HCT116 (cell line): ENCODE measurements at regions of chr22 and their contacts with region 1.

Region 1: DNA sequence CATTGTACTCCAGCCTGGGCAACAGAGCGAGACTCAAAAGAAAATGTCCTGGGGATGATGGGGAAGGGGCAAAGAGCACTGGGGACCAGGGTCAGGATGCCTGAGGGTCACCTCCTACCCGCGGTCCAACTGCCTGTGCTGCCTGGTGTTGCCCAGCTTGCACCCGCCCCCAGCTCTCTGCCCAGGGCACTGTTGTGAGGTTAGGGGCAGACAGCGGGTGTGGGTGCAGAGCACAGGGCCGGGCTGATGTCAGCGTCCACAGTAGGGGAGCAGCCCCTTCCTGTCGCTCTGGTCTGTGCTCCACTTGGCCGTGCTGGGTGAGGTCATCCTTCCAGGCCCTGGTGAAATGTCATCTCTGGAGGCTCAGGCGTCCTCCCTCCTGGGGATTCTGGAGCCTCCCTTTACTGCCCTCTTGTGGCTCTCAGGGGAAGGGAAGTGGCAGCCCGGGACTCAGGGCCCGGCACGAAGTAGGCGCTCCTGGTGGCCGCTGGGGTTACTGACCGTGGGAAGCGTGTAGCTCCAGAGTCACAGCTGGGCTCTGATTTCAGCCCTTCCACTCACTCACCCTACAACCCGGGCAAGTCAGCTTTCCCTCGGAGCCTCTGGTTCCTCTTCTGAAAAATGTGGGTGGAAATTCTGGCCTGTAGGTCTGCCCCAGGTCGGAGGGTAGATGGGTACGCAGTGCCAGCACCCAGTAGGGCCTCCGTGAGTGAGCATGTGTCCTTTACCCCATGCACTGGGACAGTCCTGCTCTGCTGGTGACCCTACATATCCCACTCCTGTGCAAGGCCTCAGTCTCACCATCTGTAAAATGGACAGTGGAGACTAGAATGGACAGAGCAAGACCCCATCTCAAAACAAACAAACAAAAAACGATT is 17.3 kb upstream of the PRR5 start:
- DNase-seq: peak; percentile 83
- ATAC-seq: peak; percentile 92
- H3K4me3 ChIP-seq: peak overlapping the region; percentile 22 to 31
- H3K27ac ChIP-seq: peak overlapping the region; percentile 3; the same call in 1 of the 2 replicates
- H3K4me1 ChIP-seq: peaks cover 27 to 32% of the 10 kb centered on the region in 2 experiments
- H3K27me3 ChIP-seq: no peaks in the 10 kb centered on the region
- CTCF ChIP-seq: peak; percentile 98 to 100 (median 99)
- POLR2A ChIP-seq: no peak
- RAD21 ChIP-seq: peak; percentile 58

Region 2: GRCh38 chr22:44550711-44551491 is 133.8 kb before region 1 on chr22:
- CTCF ChIA-PET with region 1: no interaction called
- POLR2A ChIA-PET with region 1: no interaction called
- RAD21 ChIA-PET with region 1: no interaction called
- intact Hi-C with region 1: no loop called
- DNase-seq: no peak
- ATAC-seq: no peak
- H3K4me3 ChIP-seq: no peak overlapping the region
- H3K27ac ChIP-seq: no peak overlapping the region
- H3K4me1 ChIP-seq: no peaks in the 10 kb centered on the region
- H3K27me3 ChIP-seq: peaks cover 10% of the 10 kb centered on the region; the same call in 1 of the 2 replicates
- CTCF ChIP-seq: no peak
- POLR2A ChIP-seq: no peak
- RAD21 ChIP-seq: no peak

Region 3: GRCh38 chr22:45087802-45088201 is 403.1 kb after region 1 on chr22:
- CTCF ChIA-PET with region 1: no interaction called
- POLR2A ChIA-PET with region 1: no interaction called
- RAD21 ChIA-PET with region 1: no interaction called
- intact Hi-C with region 1: loop called (anchors 5 kb)
- DNase-seq: no peak
- ATAC-seq: no peak
- H3K4me3 ChIP-seq: no peak overlapping the region
- H3K27ac ChIP-seq: no peak overlapping the region
- H3K4me1 ChIP-seq: peaks cover 0 to 4% of the 10 kb centered on the region in 2 experiments; a peak in 1 of 4 replicates
- H3K27me3 ChIP-seq: no peaks in the 10 kb centered on the region; the same call in 1 of the 2 replicates
- CTCF ChIP-seq: no peak
- POLR2A ChIP-seq: no peak
- RAD21 ChIP-seq: no peak